ENCODE measurements at regions of chr9 and their contacts with region 1.

Region 1: GRCh38 chr9:128275996-128276573 is at the starts of genes GOLGA2 and SWI5:
- DNase-seq: peak; percentile 100
- ATAC-seq: peak; percentile 99
- H3K4me3 Mint-ChIP-seq: peak within 1 kb of the TSS; percentile 97
- H3K27ac Mint-ChIP-seq: peak within 1 kb of the TSS; percentile 95
- H3K4me1 Mint-ChIP-seq: peaks cover 31% of the 10 kb centered on the region
- H3K27me3 Mint-ChIP-seq: no peaks in the 10 kb centered on the region
- total RNA-seq, gene GOLGA2: 28.4 to 29.4 TPM
- total RNA-seq, gene SWI5: 13.1 to 14.1 TPM

Region 2: GRCh38 chr9:128203024-128203706 is 72.9 kb before region 1 on chr9 and contains the start of gene DNM1:
- CTCF ChIA-PET with region 1: no interaction called
- POLR2A ChIA-PET with region 1: no interaction called
- intact Hi-C with region 1: loop called in 1 of 2 experiments (anchors 1 kb)
- DNase-seq: peak; percentile 83
- ATAC-seq: peak; percentile 95
- H3K4me3 Mint-ChIP-seq: peak within 1 kb of the TSS; percentile 39
- H3K27ac Mint-ChIP-seq: peak within 1 kb of the TSS; percentile 66
- H3K4me1 Mint-ChIP-seq: peaks cover 12% of the 10 kb centered on the region
- H3K27me3 Mint-ChIP-seq: peaks cover 11% of the 10 kb centered on the region
- total RNA-seq, gene DNM1: 0.50 to 0.72 TPM

Region 3: GRCh38 chr9:128322404-128323211 is 46.5 kb after region 1 on chr9 and contains the starts of genes COQ4 and TRUB2:
- CTCF ChIA-PET with region 1: no interaction called
- POLR2A ChIA-PET with region 1: no interaction called
- intact Hi-C with region 1: loop called in 1 of 2 experiments (anchors 1 kb)
- DNase-seq: peak; percentile 96
- ATAC-seq: peak; percentile 90
- H3K4me3 Mint-ChIP-seq: peak within 1 kb of the TSS; percentile 87
- H3K27ac Mint-ChIP-seq: peak within 1 kb of the TSS; percentile 93
- H3K4me1 Mint-ChIP-seq: peaks cover 19% of the 10 kb centered on the region
- H3K27me3 Mint-ChIP-seq: no peaks in the 10 kb centered on the region
- total RNA-seq, gene COQ4: 32.1 to 38.8 TPM
- total RNA-seq, gene TRUB2: 29.5 to 37.5 TPM

Region 4: GRCh38 chr9:128656416-128657343 is 380.6 kb after region 1 on chr9 and contains the start of gene DYNC2I2:
- CTCF ChIA-PET with region 1: no interaction called
- POLR2A ChIA-PET with region 1: no interaction called
- intact Hi-C with region 1: loop called in 1 of 2 experiments (anchors 5 kb)
- DNase-seq: peak; percentile 99
- ATAC-seq: peak; percentile 98
- H3K4me3 Mint-ChIP-seq: peak within 1 kb of the TSS; percentile 82
- H3K27ac Mint-ChIP-seq: peak within 1 kb of the TSS; percentile 100
- H3K4me1 Mint-ChIP-seq: peaks cover 6% of the 10 kb centered on the region
- H3K27me3 Mint-ChIP-seq: no peaks in the 10 kb centered on the region
- total RNA-seq, gene DYNC2I2: 26.7 to 35.7 TPM

Region 5: GRCh38 chr9:128947422-128948301 is 671.6 kb after region 1 on chr9 and contains the starts of genes DOLK and NUP188:
- CTCF ChIA-PET with region 1: no interaction called
- POLR2A ChIA-PET with region 1: no interaction called
- intact Hi-C with region 1: loop called in 1 of 2 experiments (anchors 1 kb)
- DNase-seq: peak; percentile 99
- ATAC-seq: peak; percentile 80
- H3K4me3 Mint-ChIP-seq: peak within 1 kb of the TSS; percentile 89
- H3K27ac Mint-ChIP-seq: peak within 1 kb of the TSS; percentile 95
- H3K4me1 Mint-ChIP-seq: peaks cover 29% of the 10 kb centered on the region
- H3K27me3 Mint-ChIP-seq: no peaks in the 10 kb centered on the region
- total RNA-seq, gene DOLK: 4.8 to 5.0 TPM
- total RNA-seq, gene NUP188: 102 to 124 TPM